KBM-7 (cell line): ENCODE measurements at regions of chr17 and their contacts with region 1.

Region 1: DNA sequence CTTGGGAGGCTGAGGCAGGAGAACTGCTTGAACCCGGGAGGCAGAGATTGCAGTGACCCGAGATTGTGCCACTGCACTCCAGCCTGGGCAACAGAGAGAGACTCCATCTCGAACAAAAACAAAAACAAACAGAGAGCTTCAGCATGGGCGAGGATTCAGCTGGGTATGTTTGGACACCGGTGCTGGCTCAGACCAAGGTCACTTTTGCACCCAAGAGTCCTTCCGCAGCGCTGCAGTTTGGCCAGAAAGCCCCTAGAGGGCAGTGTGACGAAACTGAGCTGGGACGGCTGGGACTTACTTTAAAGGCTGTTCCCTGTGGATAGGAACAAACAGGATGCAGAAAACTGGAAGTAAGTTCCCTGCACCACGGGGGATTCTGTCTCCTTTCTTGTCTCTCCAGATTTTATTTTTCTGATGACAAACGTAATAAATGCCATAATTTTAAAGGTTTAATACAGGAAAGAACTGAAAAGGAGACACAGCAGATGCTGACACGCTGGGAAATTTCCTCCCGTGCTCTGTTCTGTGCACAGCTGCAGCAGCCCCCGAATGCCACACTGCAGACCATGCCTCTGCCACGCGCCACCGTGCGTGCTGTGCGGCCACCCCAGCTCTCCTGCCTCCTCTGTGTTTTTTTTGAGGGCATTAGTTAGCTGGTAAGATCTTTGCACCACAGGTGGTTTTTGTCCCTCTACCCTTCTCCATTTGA is 25.2 kb upstream of the USP36 start:
- DNase-seq: peak; percentile 80

Region 2: DNA sequence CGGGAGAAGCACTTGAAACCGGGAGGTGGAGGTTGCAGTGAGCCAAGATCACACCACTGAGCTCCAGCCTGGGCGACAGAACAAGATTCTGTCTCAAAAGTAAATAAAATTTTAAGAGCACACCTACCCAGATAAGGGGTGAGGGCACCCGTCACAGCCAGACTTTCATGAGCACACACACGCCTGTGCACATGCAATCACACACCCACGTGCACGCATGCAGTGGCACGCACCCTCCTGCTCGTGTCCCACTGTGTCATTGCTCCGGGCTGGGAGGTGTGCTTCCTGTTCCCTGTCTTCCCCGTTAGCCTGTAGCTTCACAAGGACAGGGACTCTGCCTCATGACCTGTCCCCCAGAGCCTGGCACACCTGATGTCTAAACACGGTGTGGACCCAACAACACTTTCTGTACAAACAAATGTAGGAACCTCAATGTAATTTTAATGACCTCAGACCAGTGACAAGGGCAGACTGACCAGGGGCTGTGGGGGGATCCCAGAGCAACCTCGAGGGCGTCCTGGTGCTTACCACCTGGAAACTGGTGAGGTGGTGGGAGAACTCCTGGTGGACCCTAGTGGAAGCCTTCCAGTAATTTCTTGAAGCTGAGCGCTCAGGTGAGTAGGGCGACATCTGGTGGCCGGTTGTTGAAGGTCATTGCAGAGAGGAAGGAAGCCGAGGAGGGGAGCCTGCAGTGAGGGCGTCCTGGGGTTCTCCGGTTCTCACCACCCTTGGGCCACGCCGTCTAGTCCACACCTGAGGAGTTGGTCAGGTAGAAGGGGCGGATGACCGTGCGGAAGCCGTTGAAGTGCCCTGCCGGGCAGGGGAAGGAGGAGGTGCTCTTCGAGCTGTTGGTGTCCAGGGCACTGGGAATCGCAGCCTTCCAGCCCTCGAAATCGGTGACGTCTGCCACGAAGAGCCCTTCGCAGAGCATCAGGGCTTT is 105.3 kb after region 1 on chr17:
- in situ Hi-C with region 1: loop called (anchors 25 kb)
- DNase-seq: peak; percentile 82

Region 3: GRCh38 chr17:79504181-79504605 is 638.4 kb after region 1 on chr17:
- in situ Hi-C with region 1: no loop called
- DNase-seq: no peak